Activated CD8-positive, alpha-beta T cell treated with anti-CD3 and anti-CD28 coated beads for 36 hours (primary cell): ENCODE measurements at regions of chr6 and their contacts with region 1.

Region 1: GRCh38 chr6:29834564-29835436 is 7.2 kb downstream of the HLA-G start:
- DNase-seq: peak; percentile 63
- ATAC-seq: peak; percentile 45
- H3K4me3 Mint-ChIP-seq: no peak overlapping the region
- H3K27ac Mint-ChIP-seq: no peak overlapping the region
- H3K4me1 Mint-ChIP-seq: no peaks in the 10 kb centered on the region
- H3K27me3 Mint-ChIP-seq: peaks cover 44% of the 10 kb centered on the region
- CTCF ChIP-seq: peak; percentile 95

Region 2: GRCh38 chr6:29737707-29738630 is 96.8 kb before region 1 on chr6:
- CTCF ChIA-PET with region 1: interaction called, 47 read pairs
- POLR2A ChIA-PET with region 1: no interaction called
- intact Hi-C with region 1: loop called (anchors 5 kb)
- DNase-seq: peak; percentile 83
- ATAC-seq: peak; percentile 85
- H3K4me3 Mint-ChIP-seq: no peak overlapping the region
- H3K27ac Mint-ChIP-seq: no peak overlapping the region
- H3K4me1 Mint-ChIP-seq: peaks cover 11% of the 10 kb centered on the region
- H3K27me3 Mint-ChIP-seq: no peaks in the 10 kb centered on the region
- CTCF ChIP-seq: peak; percentile 84

Region 3: GRCh38 chr6:29752451-29753308 is 82.1 kb before region 1 on chr6:
- CTCF ChIA-PET with region 1: interaction called, 17 read pairs
- POLR2A ChIA-PET with region 1: interaction called, 3 read pairs
- intact Hi-C with region 1: no loop called
- DNase-seq: peak; percentile 91
- ATAC-seq: peak; percentile 77
- H3K4me3 Mint-ChIP-seq: peak overlapping the region; percentile 89
- H3K27ac Mint-ChIP-seq: peak overlapping the region; percentile 92
- H3K4me1 Mint-ChIP-seq: peaks cover 30% of the 10 kb centered on the region
- H3K27me3 Mint-ChIP-seq: no peaks in the 10 kb centered on the region
- CTCF ChIP-seq: peak; percentile 99

Region 4: GRCh38 chr6:29816030-29816429 is 18.8 kb before region 1 on chr6:
- CTCF ChIA-PET with region 1: no interaction called
- POLR2A ChIA-PET with region 1: no interaction called
- intact Hi-C with region 1: no loop called
- DNase-seq: no peak
- ATAC-seq: no peak
- H3K4me3 Mint-ChIP-seq: no peak overlapping the region
- H3K27ac Mint-ChIP-seq: no peak overlapping the region
- H3K4me1 Mint-ChIP-seq: no peaks in the 10 kb centered on the region
- H3K27me3 Mint-ChIP-seq: peaks cover 18% of the 10 kb centered on the region
- CTCF ChIP-seq: no peak